Transverse colon (tissue), 4 donors: ENCODE measurements at regions of chr6 and their contacts with region 1.

Region 1: DNA sequence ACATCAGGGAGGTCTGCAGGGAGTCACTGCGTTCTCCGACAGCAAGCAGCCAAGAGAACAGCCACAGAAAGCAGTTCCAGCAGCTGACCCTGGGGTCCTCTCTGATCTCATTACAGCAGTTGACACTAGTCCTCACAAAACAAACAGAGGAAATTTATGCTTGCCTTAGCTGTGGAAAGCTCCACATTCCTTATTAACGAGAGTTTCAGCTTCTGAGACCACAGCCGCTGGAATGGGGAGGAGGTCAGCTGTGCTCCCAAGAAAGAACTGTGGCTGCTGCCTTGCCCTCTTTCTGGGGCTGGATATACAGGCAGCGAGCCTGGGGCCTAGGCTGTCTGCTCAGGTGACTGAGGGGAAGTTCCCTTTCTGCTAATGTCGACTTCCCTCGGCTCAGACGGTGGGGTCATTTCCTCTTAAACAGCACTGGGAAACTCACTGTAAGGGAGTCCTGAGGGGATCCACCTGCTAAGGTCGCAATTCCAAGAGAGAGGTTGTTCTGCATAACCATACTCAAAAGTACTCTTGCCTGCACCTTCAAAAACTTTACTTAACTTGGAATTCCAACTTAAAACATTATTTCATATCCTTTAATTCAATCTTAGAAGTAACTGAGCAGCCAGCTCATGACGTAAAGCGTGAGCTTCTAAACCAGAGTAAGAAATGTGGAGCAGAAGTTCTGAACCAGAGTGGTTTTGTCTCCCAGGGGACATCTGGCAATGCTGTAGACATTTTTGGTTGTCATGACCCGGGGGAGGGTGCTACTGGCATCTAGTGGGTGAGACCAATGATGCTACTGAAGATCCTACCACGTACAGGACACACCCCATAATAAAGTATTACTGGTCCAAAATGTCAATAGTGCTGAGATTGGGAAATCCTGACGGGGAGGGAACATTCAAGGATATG is 80.3 kb downstream of the BACH2 start:
- DNase-seq: peak; percentile 20
- H3K4me3 ChIP-seq: no peak overlapping the region
- H3K27ac ChIP-seq: peak overlapping the region in 3 of 4 donors; percentile 12 to 28 (median 18)
- H3K4me1 ChIP-seq: peaks cover 7 to 41% (median 22%) of the 10 kb centered on the region in 4 donors
- H3K27me3 ChIP-seq: no peaks in the 10 kb centered on the region
- CTCF ChIP-seq: no peak
- EP300 ChIP-seq: no peak
- POLR2A ChIP-seq: no peak

Region 2: DNA sequence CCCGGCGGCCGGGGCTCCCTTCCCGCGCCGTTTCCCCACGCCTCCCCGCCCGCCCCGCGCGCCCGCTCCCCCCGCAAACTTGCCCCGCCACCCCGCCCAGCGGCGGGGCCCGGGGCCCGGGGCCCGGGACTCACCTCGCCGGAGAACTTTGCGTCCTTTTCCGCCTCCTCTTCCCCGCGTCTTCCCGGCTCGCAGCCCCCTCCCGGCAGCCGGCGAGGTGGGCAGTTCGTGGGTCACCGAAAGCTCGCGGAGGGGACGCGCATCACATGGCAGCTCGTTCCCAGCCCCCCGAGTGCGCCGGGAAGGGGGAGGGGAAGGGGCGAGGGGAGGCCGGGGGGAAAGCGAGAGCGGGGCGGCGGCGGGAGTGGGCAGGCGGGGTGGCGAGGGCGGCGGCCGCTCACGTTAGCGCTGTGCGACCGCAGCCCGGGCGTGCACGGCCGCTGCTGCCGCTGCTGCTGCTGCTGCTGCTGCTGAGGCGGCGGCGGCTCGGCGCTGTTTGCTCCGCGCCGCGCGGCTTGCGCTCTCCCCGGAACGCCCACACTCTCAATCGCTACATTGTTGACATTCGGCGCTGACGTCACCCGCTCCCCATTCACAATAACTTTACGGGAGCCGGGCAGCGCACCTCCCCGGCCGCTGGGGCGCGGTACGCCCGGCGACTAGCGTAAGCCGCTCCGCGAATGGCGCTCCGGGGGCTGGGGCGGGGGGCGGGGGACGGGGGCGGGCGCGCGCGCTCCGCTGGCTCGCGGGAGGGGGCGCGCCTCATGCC is 80.2 kb after region 1 on chr6 and contains the start of gene BACH2:
- in situ Hi-C with region 1: no loop called
- intact Hi-C with region 1: loop called (anchors 5 kb)
- DNase-seq: peak; percentile 93
- H3K4me3 ChIP-seq: peak within 1 kb of the TSS; percentile 59 to 89 (median 69)
- H3K27ac ChIP-seq: peak within 1 kb of the TSS; percentile 79 to 83 (median 82)
- H3K4me1 ChIP-seq: peaks cover 0 to 19% (median 12%) of the 10 kb centered on the region in 4 donors
- H3K27me3 ChIP-seq: peaks cover 67% of the 10 kb centered on the region
- CTCF ChIP-seq: peak in 2 of 5 experiments; percentile 6 to 16
- EP300 ChIP-seq: no peak
- POLR2A ChIP-seq: peak; percentile 25
- total RNA-seq, gene BACH2: 0.20 to 7.5 (median 2.4) TPM

Region 3: GRCh38 chr6:90656325-90656724 is 440.0 kb after region 1 on chr6:
- in situ Hi-C with region 1: no loop called
- intact Hi-C with region 1: no loop called
- DNase-seq: no peak
- H3K4me3 ChIP-seq: no peak overlapping the region
- H3K27ac ChIP-seq: no peak overlapping the region
- H3K4me1 ChIP-seq: no peaks in the 10 kb centered on the region
- H3K27me3 ChIP-seq: no peaks in the 10 kb centered on the region
- CTCF ChIP-seq: no peak
- EP300 ChIP-seq: no peak
- POLR2A ChIP-seq: no peak